Naive thymus-derived CD4-positive, alpha-beta T cell (primary cell): ENCODE measurements at regions of chr10 and their contacts with region 1.

Region 1: DNA sequence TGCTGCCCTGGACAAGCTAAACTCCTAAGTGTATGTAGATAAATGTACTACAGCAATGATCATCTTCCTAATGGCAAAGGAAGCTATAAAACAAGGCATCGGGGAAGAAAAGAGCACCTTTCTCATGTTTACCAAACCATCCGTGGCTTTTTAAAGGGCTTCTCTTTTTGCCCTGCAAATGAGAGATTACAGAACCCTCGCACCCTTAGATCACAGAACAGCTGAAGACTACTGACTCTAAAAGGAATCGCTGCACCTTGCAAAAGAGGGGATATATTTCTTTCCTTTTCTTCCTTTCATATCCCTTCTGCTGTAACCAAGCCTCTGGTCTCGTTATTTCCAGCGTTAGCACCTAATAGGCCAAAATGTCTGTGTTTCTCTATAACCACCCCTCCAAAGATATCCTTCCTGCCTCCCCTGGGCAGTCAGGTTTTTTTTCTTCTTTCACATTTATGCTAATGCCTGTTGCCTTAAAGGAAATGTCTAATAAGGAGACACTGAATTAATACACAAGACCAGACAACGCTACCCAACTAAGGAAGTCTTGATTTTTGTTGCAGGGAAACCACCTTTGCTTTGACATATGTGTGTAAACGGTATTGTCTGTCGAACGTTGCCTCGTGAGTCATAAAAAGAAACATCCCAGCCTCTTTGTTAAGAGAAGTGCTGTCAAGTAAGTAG is 10.5 kb downstream of the ST8SIA6 start:
- DNase-seq: peak in 2 of 9 donors; percentile 14 to 27
- ATAC-seq: peak; percentile 88
- H3K4me3 ChIP-seq: peak overlapping the region; percentile 16
- H3K4me3 Mint-ChIP-seq: peak overlapping the region in 6 of 10 donors; percentile 26 to 58 (median 43)
- H3K27ac ChIP-seq: no peak overlapping the region
- H3K27ac Mint-ChIP-seq: peak overlapping the region in 4 of 9 donors; percentile 1 to 63 (median 8)
- H3K4me1 ChIP-seq: peaks cover 9 to 14% of the 10 kb centered on the region in 2 donors
- H3K4me1 Mint-ChIP-seq: peaks cover 9 to 14% (median 11%) of the 10 kb centered on the region in 7 donors
- H3K27me3 ChIP-seq: no peaks in the 10 kb centered on the region
- H3K27me3 Mint-ChIP-seq: peaks cover 5 to 34% (median 9%) of the 10 kb centered on the region in 5 donors

Region 2: DNA sequence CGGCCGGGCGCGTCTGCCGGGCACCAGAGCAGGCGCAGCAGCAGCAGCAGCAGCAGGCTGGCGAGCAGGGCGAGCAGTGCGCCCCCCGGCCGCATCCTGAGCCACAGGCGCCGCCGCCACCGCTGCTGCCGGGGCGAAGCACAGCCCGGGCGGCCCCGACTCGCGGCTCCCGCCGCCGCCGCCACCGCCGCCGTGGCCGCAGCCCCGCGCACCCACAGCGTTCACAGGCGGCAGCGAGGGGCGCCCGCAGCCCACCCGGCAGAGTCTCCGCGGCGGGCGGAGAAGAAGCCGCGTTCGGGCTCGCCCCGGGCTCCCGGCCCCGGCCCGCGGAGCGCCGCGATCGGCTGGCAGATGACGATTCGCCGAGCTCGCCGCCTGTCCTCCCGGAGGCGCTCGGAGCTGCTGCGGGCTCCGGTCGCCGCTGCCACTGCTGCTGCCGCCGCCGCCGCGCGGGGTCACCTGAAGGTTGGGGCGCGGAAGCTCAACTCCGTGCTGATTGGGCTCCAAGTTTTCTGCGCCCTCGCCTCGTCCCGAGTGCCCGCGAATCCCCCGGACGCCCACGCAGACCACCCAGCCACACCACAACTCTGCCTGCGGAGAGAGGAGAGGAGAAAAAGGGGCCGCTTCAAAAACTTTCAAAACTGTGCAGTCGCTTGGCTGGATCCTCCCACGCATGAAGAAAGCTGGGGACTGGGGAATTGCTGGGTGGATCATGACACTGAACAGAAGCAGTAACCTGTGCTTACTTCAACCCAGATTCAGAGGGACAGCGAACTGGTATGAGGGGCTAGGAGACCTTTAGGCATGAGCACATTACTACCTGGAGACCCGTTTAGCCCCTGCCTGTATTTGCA is 10.5 kb after region 1 on chr10 and contains the start of gene ST8SIA6:
- CTCF ChIA-PET with region 1: interaction called, 3 read pairs
- POLR2A ChIA-PET with region 1: interaction called, 5 read pairs
- intact Hi-C with region 1: loop called in 1 of 2 experiments (anchors 1 kb)
- DNase-seq: peak; percentile 26 to 64 (median 52)
- ATAC-seq: peak; percentile 80
- H3K4me3 ChIP-seq: peak within 1 kb of the TSS; percentile 64
- H3K4me3 Mint-ChIP-seq: peak within 1 kb of the TSS; percentile 82 to 92 (median 89)
- H3K27ac ChIP-seq: peak within 1 kb of the TSS; percentile 29
- H3K27ac Mint-ChIP-seq: peak within 1 kb of the TSS in 5 of 9 donors; percentile 18 to 87 (median 74)
- H3K4me1 ChIP-seq: peaks cover 4 to 10% of the 10 kb centered on the region in 2 donors
- H3K4me1 Mint-ChIP-seq: peaks cover 5 to 23% (median 20%) of the 10 kb centered on the region in 7 donors
- H3K27me3 ChIP-seq: no peaks in the 10 kb centered on the region
- H3K27me3 Mint-ChIP-seq: peaks cover 0 to 66% (median 5%) of the 10 kb centered on the region in 5 donors
- total RNA-seq, gene ST8SIA6: 0.43 to 2.5 (median 0.60) TPM

Region 3: GRCh38 chr10:17504547-17505245 is 60.8 kb after region 1 on chr10:
- CTCF ChIA-PET with region 1: no interaction called
- POLR2A ChIA-PET with region 1: no interaction called
- intact Hi-C with region 1: loop called in 1 of 2 experiments (anchors 5 kb)
- DNase-seq: no peak
- ATAC-seq: no peak
- H3K4me3 ChIP-seq: no peak overlapping the region
- H3K4me3 Mint-ChIP-seq: peak overlapping the region in 6 of 10 donors; percentile 9 to 53 (median 40)
- H3K27ac ChIP-seq: no peak overlapping the region
- H3K27ac Mint-ChIP-seq: peak overlapping the region in 8 of 9 donors; percentile 10 to 84 (median 46)
- H3K4me1 ChIP-seq: peaks cover 15 to 17% of the 10 kb centered on the region in 2 donors
- H3K4me1 Mint-ChIP-seq: peaks cover 23 to 50% (median 33%) of the 10 kb centered on the region in 7 donors
- H3K27me3 ChIP-seq: no peaks in the 10 kb centered on the region
- H3K27me3 Mint-ChIP-seq: peaks cover 0 to 10% (median 0%) of the 10 kb centered on the region in 5 donors